RWPE1 (cell line): ENCODE measurements at regions of chr7 and their contacts with region 1.

Region 1: DNA sequence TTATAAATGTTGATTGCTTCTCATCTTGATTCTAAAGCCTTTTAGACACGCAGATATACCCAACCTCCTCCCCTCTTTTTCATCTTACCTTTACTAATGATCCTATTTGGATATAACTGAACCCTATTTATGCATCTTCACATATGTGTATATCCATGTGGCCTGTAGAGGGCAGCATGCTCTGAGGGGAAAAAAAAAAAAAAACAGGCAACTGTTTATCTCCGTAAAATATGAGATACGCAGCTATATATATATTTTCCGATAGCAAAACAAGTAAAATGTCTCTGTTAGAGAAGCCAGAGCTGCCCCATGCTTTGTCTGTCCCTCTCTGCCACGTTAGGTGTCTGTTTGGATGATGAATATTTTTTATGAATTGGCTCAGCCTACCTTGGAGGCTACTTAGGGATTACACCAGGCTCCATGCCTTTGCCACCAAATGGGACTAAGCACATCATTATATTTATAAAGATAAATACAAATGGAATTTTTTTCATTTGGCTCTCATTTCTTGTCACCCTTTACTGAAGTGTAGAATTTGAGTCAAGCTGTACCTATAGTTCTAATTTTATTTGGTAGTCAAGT is 174.8 kb upstream of the FZD1 start:
- DNase-seq: peak; percentile 20
- H3K27ac ChIP-seq: no peak overlapping the region
- CTCF ChIP-seq: peak; percentile 94

Region 2: DNA sequence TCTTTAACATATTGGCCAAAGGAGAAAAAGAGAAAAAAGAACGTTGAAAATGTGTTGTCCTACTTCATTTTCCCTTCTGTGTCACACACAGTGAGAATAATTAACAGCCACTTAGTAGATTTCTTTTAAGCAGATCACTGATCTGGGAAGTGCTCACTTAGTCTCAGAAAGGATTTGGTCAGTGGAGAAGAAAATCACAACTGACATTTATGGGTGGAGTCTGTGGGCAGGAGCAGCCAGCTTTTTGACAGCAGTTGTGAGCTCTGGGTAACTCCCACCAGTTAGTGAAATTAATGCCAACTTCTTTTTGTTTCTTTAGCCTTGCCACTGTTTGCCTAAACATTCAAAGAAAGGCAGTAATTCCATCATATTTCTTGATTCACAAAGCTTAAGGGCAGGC is 443.7 kb before region 1 on chr7:
- CTCF ChIA-PET with region 1: interaction called, 10 read pairs
- POLR2A ChIA-PET with region 1: no interaction called
- DNase-seq: no peak
- H3K27ac ChIP-seq: no peak overlapping the region
- CTCF ChIP-seq: no peak

Region 3: GRCh38 chr7:90816511-90817142 is 272.8 kb before region 1 on chr7:
- CTCF ChIA-PET with region 1: no interaction called
- POLR2A ChIA-PET with region 1: no interaction called
- DNase-seq: peak; percentile 68
- H3K27ac ChIP-seq: no peak overlapping the region
- CTCF ChIP-seq: no peak

Region 4: DNA sequence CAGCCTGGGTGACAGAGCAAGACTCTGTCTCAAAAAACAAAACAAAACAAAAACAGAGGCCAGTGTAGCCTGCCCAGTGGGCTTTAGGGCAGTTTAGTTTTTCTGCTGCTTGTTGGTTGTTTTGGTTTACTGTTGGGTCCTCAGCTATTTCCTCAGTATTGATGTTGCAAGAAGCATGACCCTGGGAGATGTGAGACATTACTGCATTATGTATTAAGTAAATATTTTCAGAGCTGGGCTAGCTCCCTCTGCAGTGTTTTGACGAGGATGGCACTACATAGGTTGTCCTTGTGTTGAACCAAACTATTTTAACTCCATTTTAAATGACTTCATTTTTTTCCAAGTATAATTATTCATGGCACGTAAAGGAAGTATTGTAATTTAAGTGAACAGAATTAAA is 856.0 kb after region 1 on chr7:
- CTCF ChIA-PET with region 1: interaction called, 11 read pairs
- POLR2A ChIA-PET with region 1: no interaction called
- DNase-seq: no peak
- H3K27ac ChIP-seq: peak overlapping the region; percentile 17; the same call in 1 of the 2 replicates
- CTCF ChIP-seq: no peak

Region 5: DNA sequence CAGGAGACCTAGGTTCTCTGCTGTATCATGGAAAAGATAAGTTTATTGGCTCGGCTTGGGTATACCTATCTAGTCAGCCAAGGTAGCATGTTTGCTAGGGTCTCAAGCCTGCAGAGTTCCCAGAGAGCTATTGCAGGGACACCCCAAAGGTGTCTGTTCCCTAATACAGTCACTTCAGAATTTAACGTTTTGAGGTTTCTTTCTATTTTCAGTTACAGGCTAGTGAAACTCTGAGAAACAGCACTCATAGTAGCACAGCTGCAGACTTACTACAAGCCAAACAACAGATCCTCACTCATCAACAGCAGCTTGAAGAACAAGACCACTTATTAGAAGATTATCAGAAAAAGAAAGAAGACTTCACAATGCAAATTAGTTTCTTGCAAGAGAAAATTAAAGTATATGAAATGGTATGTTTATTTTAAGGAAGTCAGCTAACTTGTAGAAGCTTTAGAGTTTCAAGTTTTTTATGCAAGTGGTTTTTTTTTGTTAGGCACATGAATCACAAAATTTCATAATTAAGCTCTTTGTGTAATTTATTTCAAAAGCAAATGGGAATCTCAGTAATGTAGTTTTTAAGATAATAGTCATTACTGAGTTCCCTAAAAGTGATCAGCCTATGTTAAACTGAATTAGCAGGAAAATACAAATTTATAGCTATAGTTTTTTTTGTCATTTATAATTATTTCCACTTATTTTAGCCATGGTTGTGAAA is 906.1 kb after region 1 on chr7:
- CTCF ChIA-PET with region 1: no interaction called
- POLR2A ChIA-PET with region 1: no interaction called
- DNase-seq: no peak
- H3K27ac ChIP-seq: no peak overlapping the region
- CTCF ChIP-seq: no peak